ENCODE measurements at regions of chr19 and their contacts with region 1.

Region 1: DNA sequence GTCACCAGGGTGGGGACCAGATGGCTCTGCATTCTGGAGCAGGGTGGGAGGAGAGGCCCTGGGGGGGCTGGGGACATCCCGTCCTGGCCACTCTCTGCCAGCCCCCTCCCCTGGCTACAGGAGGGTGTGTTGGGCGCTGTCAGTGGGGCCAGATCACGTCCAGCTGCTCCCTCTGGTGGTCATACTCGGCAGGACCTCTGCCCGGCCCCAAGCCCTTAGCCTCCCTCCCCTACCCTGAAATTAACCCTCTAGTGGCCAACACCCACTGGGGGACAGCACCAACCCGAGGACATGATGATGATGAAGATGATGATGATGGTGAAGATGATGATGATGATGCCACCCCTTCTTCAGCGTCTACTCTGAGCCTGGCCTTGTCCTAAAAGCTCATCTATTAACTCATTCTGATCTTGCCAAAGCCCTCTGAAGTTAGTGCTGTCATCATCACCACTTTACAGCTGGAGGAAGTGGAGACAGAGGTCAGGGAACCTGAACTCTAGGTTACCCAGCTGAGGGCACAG is 590 bp upstream of the LGI4 start:
- DNase-seq: no peak
- H3K4me3 ChIP-seq: no peak overlapping the region
- H3K27ac ChIP-seq: no peak overlapping the region
- H3K4me1 ChIP-seq: peaks cover 12% of the 10 kb centered on the region
- H3K27me3 ChIP-seq: no peaks in the 10 kb centered on the region
- CTCF ChIP-seq: peak; percentile 67 to 90

Region 2: GRCh38 chr19:35044317-35045117 is 90.9 kb before region 1 on chr19:
- CTCF ChIA-PET with region 1: no interaction called
- dilution Hi-C with region 1: no loop called
- in situ Hi-C with region 1: no loop called
- intact Hi-C with region 1: loop called (anchors 1 kb)
- DNase-seq: peak; percentile 48
- H3K4me3 ChIP-seq: no peak overlapping the region
- H3K27ac ChIP-seq: no peak overlapping the region
- H3K4me1 ChIP-seq: peaks cover 11% of the 10 kb centered on the region
- H3K27me3 ChIP-seq: no peaks in the 10 kb centered on the region
- CTCF ChIP-seq: peak; percentile 93 to 96

Region 3: DNA sequence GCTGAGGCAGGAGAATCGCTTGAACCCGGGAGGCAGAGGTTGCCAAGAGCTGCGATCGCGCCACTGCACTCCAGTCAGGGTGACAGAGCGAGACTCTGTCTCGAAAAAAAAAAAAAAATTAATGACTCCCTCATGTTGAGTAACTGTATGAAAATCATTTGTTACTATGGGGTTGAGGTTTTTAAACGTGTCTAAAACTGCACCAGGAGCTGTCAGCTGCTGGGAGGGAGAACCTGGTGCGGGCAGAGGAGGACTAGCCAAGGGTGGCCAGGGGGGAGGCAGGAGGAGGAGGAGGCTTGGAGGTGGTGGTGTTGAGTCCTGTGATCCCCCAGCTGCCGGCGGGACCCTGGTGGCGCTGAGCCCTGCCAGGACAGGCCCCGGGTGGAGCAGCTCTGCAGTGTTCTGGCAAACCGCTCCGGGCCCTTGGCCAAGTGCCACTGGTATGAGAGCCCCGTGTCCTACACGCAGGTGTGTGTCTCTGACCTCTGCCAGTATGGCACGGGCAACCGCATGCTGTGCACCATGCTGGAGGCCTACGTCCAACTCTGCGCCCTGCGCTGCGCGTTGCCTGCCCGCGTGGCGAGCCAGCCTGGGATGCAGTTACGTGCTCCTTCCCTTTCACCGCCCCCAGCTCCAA is 36.9 kb before region 1 on chr19:
- CTCF ChIA-PET with region 1: no interaction called
- dilution Hi-C with region 1: loop called (anchors 5 kb)
- in situ Hi-C with region 1: no loop called
- intact Hi-C with region 1: no loop called
- DNase-seq: peak; percentile 83
- H3K4me3 ChIP-seq: no peak overlapping the region
- H3K27ac ChIP-seq: peak overlapping the region; percentile 24
- H3K4me1 ChIP-seq: peaks cover 32% of the 10 kb centered on the region
- H3K27me3 ChIP-seq: no peaks in the 10 kb centered on the region
- CTCF ChIP-seq: no peak

Region 4: GRCh38 chr19:35124098-35125060 is 11.1 kb before region 1 on chr19:
- CTCF ChIA-PET with region 1: no interaction called
- dilution Hi-C with region 1: no loop called
- in situ Hi-C with region 1: no loop called
- intact Hi-C with region 1: loop called (anchors 1 kb)
- DNase-seq: peak; percentile 89
- H3K4me3 ChIP-seq: no peak overlapping the region
- H3K27ac ChIP-seq: peak overlapping the region; percentile 74
- H3K4me1 ChIP-seq: peaks cover 74% of the 10 kb centered on the region
- H3K27me3 ChIP-seq: no peaks in the 10 kb centered on the region
- CTCF ChIP-seq: no peak

Region 5: GRCh38 chr19:35330475-35330874 is 195.0 kb after region 1 on chr19:
- CTCF ChIA-PET with region 1: no interaction called
- dilution Hi-C with region 1: loop called (anchors 5 kb)
- in situ Hi-C with region 1: no loop called
- intact Hi-C with region 1: no loop called
- DNase-seq: no peak
- H3K4me3 ChIP-seq: no peak overlapping the region
- H3K27ac ChIP-seq: no peak overlapping the region
- H3K4me1 ChIP-seq: peaks cover 5% of the 10 kb centered on the region
- H3K27me3 ChIP-seq: no peaks in the 10 kb centered on the region
- CTCF ChIP-seq: no peak

Measured in mammary epithelial cell (primary cell).